Activated CD4-positive, alpha-beta memory T cell treated with anti-CD3 and anti-CD28 coated beads, Interleukin-2, amount 10 ng/mL, durations not matched to agents 7 days and 5 days (primary cell): ENCODE measurements at regions of chrX and their contacts with region 1.

Region 1: DNA sequence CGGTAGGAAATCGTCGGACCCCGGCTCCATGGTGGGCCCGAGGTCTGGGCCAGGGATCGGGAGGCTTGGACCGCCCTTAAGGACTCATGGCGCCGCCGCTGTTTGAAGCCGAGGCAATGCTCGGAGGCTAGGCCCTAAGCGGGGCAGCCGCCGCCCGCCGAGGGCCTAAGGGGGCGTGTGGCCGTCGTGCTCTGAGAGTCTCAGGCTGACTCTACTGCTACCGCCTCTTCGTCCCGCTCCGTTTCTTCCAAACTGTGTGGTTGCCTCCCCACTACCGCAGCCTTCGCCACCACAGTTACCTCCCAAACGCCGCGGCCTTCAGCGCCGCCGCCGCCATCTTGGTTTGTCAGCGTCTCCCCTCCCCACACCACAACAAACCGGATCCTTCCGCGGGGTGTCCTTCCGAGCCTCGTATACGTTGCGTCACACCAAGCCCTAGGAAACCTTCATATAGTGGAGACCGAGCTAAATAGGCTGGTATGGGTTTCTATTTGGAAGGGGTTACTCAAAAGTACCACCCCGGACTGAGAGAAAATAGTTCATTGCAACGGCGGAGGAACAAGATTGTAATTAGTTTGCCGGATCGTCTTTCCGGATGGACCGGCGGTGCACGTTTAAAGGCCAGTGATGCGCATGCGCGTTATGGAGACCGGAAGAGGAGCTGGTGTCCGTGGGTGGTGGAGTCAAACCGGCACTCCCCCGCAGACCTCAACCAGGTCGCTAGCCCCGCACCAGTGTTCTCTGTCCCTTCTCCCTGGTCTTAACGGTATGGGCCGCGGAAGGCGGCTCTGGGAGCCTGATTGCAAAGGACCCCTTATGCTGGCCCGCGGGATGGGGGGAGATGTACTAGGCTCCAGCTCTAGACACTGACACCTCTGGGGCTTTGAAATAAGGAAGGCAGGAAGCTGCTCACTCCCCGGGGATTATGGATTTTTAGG is at the start of gene KDM5C:
- DNase-seq: peak; percentile 87
- H3K4me3 Mint-ChIP-seq: peak within 1 kb of the TSS; percentile 89
- H3K27ac Mint-ChIP-seq: peak within 1 kb of the TSS; percentile 94
- H3K4me1 Mint-ChIP-seq: peaks cover 48% of the 10 kb centered on the region
- H3K27me3 Mint-ChIP-seq: no peaks in the 10 kb centered on the region
- total RNA-seq, gene KDM5C: 95.5 to 99.9 TPM

Region 2: GRCh38 chrX:53184836-53185235 is 40.3 kb before region 1 on chrX:
- CTCF ChIA-PET with region 1: no interaction called
- POLR2A ChIA-PET with region 1: no interaction called
- DNase-seq: no peak
- H3K4me3 Mint-ChIP-seq: no peak overlapping the region
- H3K27ac Mint-ChIP-seq: no peak overlapping the region
- H3K4me1 Mint-ChIP-seq: peaks cover 12% of the 10 kb centered on the region
- H3K27me3 Mint-ChIP-seq: no peaks in the 10 kb centered on the region

Region 3: GRCh38 chrX:53262918-53263394 is 37.8 kb after region 1 on chrX:
- CTCF ChIA-PET with region 1: no interaction called
- POLR2A ChIA-PET with region 1: interaction called, 11 read pairs
- DNase-seq: peak; percentile 48
- H3K4me3 Mint-ChIP-seq: peak overlapping the region; percentile 25
- H3K27ac Mint-ChIP-seq: peak overlapping the region; percentile 16
- H3K4me1 Mint-ChIP-seq: peaks cover 40% of the 10 kb centered on the region
- H3K27me3 Mint-ChIP-seq: peaks cover 3% of the 10 kb centered on the region

Region 4: DNA sequence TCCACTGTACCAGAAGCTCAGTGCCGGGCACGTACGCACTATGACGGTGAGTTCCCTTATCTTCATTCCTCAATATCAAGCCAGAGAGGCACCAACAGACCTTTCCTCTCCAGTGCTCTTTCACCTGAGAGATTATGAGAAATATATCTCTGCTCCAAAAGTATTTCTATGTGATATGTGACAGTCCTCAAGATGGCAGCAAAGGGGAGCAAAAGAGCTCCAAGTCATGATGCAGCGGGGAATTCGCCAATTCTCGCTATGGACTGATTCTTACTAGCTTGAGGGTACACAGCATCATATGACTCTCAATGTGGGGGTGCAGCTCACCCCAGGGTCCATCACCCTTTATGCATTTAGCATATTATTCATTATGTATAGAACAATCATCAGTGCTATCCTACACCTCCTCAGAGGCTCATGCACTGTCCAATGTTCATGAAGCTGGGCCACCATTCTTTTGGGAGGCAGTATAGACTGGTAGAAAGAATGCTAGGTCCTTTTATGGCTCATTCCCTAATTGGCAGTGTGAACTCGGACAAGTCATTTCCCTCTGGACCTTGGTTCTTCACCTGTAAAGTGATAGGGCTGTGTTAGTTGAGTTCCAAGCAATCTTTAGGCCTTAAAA is 69.0 kb after region 1 on chrX:
- CTCF ChIA-PET with region 1: no interaction called
- POLR2A ChIA-PET with region 1: no interaction called
- DNase-seq: no peak
- H3K4me3 Mint-ChIP-seq: no peak overlapping the region
- H3K27ac Mint-ChIP-seq: no peak overlapping the region
- H3K4me1 Mint-ChIP-seq: no peaks in the 10 kb centered on the region
- H3K27me3 Mint-ChIP-seq: no peaks in the 10 kb centered on the region